ENCODE measurements at regions of chr19 and their contacts with region 1.

Region 1: DNA sequence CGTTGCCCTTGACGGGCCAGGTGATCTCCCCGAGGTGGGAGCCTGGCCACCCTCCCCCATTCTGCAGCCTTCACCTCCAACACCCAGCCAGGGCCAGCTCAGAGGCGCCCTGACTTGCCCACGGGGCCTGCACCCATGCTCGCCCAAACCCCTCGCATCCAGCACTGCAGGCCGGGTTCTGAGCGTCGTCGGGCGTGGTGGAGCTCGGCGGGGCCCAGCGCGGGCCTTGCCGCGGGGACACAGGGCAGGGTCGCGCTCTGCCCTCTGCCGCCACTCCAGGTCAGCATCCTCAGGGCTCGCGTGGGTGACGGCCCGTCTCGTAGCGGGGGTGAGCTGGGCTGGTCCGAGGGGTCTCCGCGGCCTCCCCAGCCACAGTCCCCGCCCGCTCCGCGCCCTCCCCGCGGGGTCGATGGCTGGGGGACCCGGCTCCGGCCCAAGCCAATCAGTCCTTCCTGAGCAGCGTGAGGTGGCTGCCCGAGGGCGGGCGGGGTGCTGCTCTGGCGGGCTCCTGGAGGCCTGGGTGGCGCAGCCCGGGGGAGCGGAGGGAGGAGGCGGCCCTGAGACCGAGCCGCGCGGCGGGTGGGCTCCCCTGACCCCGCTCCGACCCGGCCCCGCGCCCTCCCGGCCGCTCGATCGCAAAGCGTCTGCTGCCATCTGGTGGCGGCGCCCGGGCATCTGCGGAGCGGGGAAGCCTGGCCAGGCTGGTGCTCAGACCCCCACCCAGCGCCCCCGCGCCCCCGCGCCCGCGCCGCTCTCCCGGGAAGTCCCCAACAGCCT is 61.4 kb downstream of the CCNE1 start:
- DNase-seq: peak; percentile 92
- H3K4me3 ChIP-seq: peak overlapping the region; percentile 15 to 73 (median 46)
- H3K27ac ChIP-seq: peak overlapping the region in 1 of 8 donors; percentile 35
- H3K4me1 ChIP-seq: peaks cover 14 to 29% (median 24%) of the 10 kb centered on the region in 6 donors
- H3K27me3 ChIP-seq: peaks cover 2 to 47% (median 24%) of the 10 kb centered on the region in 7 donors
- CTCF ChIP-seq: peak; percentile 54 to 93 (median 90)
- POLR2A ChIP-seq: no peak

Region 2: GRCh38 chr19:29761575-29762232 is 111.5 kb before region 1 on chr19:
- intact Hi-C with region 1: loop called (anchors 5 kb)
- DNase-seq: no peak
- H3K4me3 ChIP-seq: no peak overlapping the region
- H3K27ac ChIP-seq: no peak overlapping the region
- H3K4me1 ChIP-seq: peaks cover 0 to 10% (median 6%) of the 10 kb centered on the region in 6 donors
- H3K27me3 ChIP-seq: peaks cover 0 to 23% (median 0%) of the 10 kb centered on the region in 7 donors
- CTCF ChIP-seq: no peak
- POLR2A ChIP-seq: no peak

Region 3: DNA sequence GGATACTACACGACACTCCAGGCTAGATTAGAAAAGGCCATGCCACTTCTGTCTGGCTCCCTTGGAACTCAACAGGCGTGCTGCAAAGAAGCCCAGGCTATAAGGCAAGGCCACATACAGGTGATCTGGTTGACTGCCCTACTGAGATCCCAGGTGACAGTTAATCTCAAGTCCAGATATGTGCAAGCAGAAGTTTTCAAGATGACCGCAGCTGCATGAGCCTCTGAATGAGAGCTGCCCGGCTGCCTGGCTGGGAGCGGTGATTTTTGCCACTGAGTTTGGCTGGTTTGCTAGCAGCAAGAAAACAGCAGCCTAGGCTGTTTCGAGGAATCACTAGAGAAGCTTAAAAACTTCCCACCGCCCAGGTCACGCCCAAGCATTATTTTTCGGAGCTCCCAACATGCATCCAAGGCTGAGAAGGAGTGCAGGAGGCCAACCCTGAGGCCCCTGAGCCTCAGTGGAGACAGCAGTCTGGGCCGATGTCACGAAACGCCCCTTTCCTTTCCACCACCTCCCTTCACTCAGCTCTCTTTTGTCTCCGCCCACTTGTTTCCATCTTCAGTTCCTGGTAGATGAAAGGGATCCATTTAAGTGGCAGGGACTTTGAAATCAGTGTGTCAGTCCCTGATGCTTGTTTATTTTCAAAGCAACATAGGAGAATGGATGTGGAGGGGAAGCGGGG is 54.9 kb after region 1 on chr19:
- intact Hi-C with region 1: no loop called
- DNase-seq: no peak
- H3K4me3 ChIP-seq: no peak overlapping the region
- H3K27ac ChIP-seq: no peak overlapping the region
- H3K4me1 ChIP-seq: no peaks in the 10 kb centered on the region
- H3K27me3 ChIP-seq: no peaks in the 10 kb centered on the region
- CTCF ChIP-seq: no peak
- POLR2A ChIP-seq: no peak

Measured in spleen (tissue), 13 donors.